PC-3 (cell line): ENCODE measurements at regions of chr16 and their contacts with region 1.

Region 1: DNA sequence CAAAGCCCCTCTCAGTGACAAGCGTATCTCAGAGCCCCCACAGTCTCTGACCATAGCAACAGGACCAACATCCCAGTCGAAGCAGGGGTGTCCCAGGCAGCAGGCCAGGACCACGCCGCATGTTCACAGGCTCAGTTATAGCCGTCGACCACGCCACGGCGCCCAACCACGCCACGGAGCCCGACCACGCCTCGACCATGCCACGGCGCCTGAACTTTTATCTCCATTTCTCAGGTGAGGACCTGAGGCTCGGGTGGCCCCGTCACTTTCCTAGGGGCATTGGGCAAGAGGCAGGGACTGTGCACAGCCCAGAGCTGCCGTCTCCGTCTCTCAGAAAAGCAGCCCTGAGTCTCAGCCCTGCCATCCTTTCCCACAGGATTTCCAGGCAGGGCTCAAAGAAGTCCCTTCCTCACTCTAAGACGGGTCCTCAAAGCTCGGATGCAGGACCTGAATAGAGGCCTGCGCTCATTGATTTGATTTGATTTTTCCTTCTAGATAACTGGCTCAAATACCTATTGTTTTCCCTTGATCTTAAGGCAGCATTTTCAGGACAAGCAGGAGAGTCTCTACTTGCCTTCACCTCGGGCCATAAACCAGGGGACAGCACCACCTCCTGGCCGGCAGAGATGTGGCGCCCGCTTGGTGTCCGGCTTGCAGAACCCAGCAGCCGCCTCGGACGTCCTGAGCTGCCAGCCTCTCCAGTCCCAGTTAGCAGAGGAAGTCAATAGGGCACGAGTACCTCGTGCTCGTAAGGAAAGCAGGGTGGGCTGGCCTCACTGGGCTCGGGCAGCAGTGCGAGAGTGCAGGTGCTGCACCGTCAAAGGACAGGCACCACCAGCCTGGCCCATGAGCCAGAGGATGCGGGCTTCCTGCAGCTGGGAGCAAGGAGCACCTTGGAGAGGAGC is 38.7 kb downstream of the C16orf95 start:
- DNase-seq: peak; percentile 69
- ATAC-seq: peak; percentile 99
- H3K4me3 ChIP-seq: no peak overlapping the region
- H3K27ac ChIP-seq: no peak overlapping the region
- H3K4me1 ChIP-seq: no peaks in the 10 kb centered on the region
- H3K27me3 ChIP-seq: no peaks in the 10 kb centered on the region
- CTCF ChIP-seq: peak; percentile 88

Region 2: GRCh38 chr16:87062569-87063442 is 215.6 kb before region 1 on chr16:
- CTCF ChIA-PET with region 1: no interaction called
- POLR2A ChIA-PET with region 1: no interaction called
- intact Hi-C with region 1: loop called (anchors 2 kb)
- DNase-seq: peak; percentile 73
- ATAC-seq: peak; percentile 92
- H3K4me3 ChIP-seq: peak overlapping the region; percentile 55
- H3K27ac ChIP-seq: no peak overlapping the region
- H3K4me1 ChIP-seq: peaks cover 7% of the 10 kb centered on the region; the same call in 1 of the 2 replicates
- H3K27me3 ChIP-seq: no peaks in the 10 kb centered on the region
- CTCF ChIP-seq: peak; percentile 86

Region 3: GRCh38 chr16:87172632-87173031 is 105.8 kb before region 1 on chr16:
- CTCF ChIA-PET with region 1: no interaction called
- POLR2A ChIA-PET with region 1: no interaction called
- intact Hi-C with region 1: no loop called
- DNase-seq: no peak
- ATAC-seq: no peak
- H3K4me3 ChIP-seq: no peak overlapping the region
- H3K27ac ChIP-seq: no peak overlapping the region
- H3K4me1 ChIP-seq: no peaks in the 10 kb centered on the region
- H3K27me3 ChIP-seq: no peaks in the 10 kb centered on the region
- CTCF ChIP-seq: peak; percentile 25; the same call in 1 of the 2 replicates

Region 4: GRCh38 chr16:87185312-87185711 is 93.1 kb before region 1 on chr16:
- CTCF ChIA-PET with region 1: interaction called, 3 read pairs
- POLR2A ChIA-PET with region 1: no interaction called
- intact Hi-C with region 1: loop called (anchors 2 kb)
- DNase-seq: no peak
- ATAC-seq: no peak
- H3K4me3 ChIP-seq: no peak overlapping the region
- H3K27ac ChIP-seq: no peak overlapping the region
- H3K4me1 ChIP-seq: peaks cover under 1% of the 10 kb centered on the region; the same call in 1 of the 2 replicates
- H3K27me3 ChIP-seq: no peaks in the 10 kb centered on the region
- CTCF ChIP-seq: peak; percentile 36; the same call in 1 of the 2 replicates

Region 5: DNA sequence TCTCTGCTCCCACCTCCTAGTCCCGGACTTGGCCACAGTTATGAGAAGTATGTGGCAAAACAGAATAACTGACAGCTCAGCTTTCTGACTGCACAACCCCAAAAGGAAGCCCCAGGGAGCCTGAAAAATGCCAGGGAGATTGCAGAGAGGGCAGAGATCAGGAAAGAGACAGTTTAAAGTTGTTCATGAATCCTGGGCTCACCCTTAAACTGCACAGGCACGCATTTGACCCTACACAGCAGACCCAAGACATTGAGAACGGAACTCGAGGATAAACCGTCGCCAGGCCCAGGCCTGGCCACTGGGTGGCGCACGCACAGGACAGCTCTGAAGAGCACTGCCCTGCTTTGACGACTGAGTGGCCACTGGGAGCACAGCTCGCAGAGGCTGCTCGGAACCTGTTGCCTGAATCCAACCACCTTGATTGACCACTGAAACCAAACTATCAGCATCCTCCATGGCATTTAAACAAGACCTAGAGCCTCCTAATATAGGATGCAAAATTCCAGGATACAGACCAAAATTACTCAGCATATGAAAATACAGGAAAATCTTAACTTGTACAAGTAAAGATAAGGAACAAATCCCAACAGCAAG is 75.3 kb before region 1 on chr16:
- CTCF ChIA-PET with region 1: interaction called, 4 read pairs
- POLR2A ChIA-PET with region 1: no interaction called
- intact Hi-C with region 1: loop called (anchors 2 kb)
- DNase-seq: peak; percentile 75
- ATAC-seq: peak; percentile 45
- H3K4me3 ChIP-seq: no peak overlapping the region
- H3K27ac ChIP-seq: no peak overlapping the region
- H3K4me1 ChIP-seq: peaks cover 34% of the 10 kb centered on the region
- H3K27me3 ChIP-seq: no peaks in the 10 kb centered on the region
- CTCF ChIP-seq: peak; percentile 84

Region 6: GRCh38 chr16:87215797-87216473 is 62.5 kb before region 1 on chr16:
- CTCF ChIA-PET with region 1: no interaction called
- POLR2A ChIA-PET with region 1: no interaction called
- intact Hi-C with region 1: no loop called
- DNase-seq: peak; percentile 9
- ATAC-seq: peak; percentile 38; the same call in 1 of the 2 replicates
- H3K4me3 ChIP-seq: no peak overlapping the region
- H3K27ac ChIP-seq: no peak overlapping the region
- H3K4me1 ChIP-seq: peaks cover 8% of the 10 kb centered on the region; the same call in 1 of the 2 replicates
- H3K27me3 ChIP-seq: no peaks in the 10 kb centered on the region
- CTCF ChIP-seq: no peak